Right ventricle myocardium inferior (tissue), 1 donor: ENCODE measurements at regions of chr7 and their contacts with region 1.

Region 1: GRCh38 chr7:47379629-47380324 is 202.1 kb downstream of the TNS3 start:
- DNase-seq: peak; percentile 85
- ATAC-seq: peak; percentile 92

Region 2: DNA sequence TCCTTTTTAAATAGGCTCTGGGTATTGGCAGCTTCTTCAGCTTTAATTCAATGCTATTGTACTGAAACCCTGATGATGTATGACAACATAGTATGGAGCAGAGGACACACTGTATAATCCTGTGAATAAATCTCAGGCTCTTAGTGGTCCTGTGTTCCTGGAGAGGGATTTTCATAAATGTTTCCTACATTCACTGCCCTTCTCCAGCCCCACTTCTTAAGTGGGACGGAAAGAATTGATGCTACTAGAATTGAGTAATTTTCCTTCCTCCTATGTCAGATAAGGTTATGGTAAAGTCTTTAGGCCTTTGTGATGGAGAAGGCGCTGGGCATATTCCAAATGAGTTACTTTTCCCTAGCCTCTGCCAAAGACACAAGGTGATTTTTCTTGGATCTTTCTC is 577.3 kb before region 1 on chr7:
- intact Hi-C with region 1: no loop called
- DNase-seq: no peak
- ATAC-seq: no peak

Region 3: GRCh38 chr7:47045207-47046051 is 334.3 kb before region 1 on chr7:
- intact Hi-C with region 1: no loop called
- DNase-seq: peak; percentile 67
- ATAC-seq: peak; percentile 76

Region 4: GRCh38 chr7:47314728-47315607 is 64.8 kb before region 1 on chr7:
- intact Hi-C with region 1: loop called (anchors 2 kb)
- DNase-seq: no peak
- ATAC-seq: peak; percentile 75

Region 5: GRCh38 chr7:47418601-47419381 is 39.0 kb after region 1 on chr7:
- intact Hi-C with region 1: no loop called
- DNase-seq: no peak
- ATAC-seq: no peak

Region 6: GRCh38 chr7:48015308-48015707 is 635.5 kb after region 1 on chr7:
- intact Hi-C with region 1: no loop called
- DNase-seq: no peak
- ATAC-seq: no peak